Activated T-helper 1 cell treated with anti-CD3 and anti-CD28 coated beads, Interleukin-12 subunit alpha, Interleukin-12 subunit beta, Interleukin-2, Interleukin-4 antibody, amounts not matched to agents 30 ng/mL and 10 ng/mL and 1 ng/mL, durations not matched to agents 14 hours and 24 hours and 36 hours (primary cell): ENCODE measurements at regions of chr1 and their contacts with region 1.

Region 1: DNA sequence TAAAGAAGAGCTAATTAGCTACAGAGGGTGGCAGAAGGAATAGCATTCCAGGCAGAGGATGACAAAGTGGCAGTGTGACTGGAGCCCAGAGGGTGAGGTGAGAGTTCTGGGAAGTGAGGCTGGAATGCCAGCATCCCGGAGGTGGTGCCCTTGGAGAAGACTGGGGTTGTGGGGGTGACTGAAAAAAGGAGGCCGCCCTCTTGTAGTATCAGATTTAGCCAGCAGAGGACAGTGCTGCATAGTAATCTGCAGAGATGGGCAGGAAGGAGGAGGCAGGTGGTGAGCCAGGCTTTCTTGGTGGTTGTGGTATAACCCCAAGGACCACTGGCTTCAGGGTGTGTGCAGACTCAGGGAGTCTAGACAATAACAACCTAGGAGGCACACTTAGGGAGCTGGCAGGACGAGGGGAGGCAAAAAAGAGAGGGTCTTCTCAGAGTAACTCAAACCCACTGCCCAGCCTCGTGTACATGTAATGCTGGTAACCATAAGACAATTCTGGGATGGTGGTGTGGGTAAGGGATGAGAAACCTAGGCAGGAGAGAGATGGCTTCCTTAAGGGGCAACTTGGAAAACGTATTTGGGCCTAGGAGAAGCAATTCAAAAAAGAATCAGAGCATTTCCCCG is 30.5 kb downstream of the MROH7 start:
- DNase-seq: peak; percentile 59
- H3K4me3 Mint-ChIP-seq: no peak overlapping the region
- H3K27ac Mint-ChIP-seq: no peak overlapping the region
- H3K4me1 Mint-ChIP-seq: no peaks in the 10 kb centered on the region
- H3K27me3 Mint-ChIP-seq: peaks cover 6% of the 10 kb centered on the region

Region 2: GRCh38 chr1:54070171-54070837 is 601.8 kb before region 1 on chr1:
- intact Hi-C with region 1: loop called (anchors 5 kb)
- DNase-seq: no peak
- H3K4me3 Mint-ChIP-seq: no peak overlapping the region
- H3K27ac Mint-ChIP-seq: no peak overlapping the region
- H3K4me1 Mint-ChIP-seq: no peaks in the 10 kb centered on the region
- H3K27me3 Mint-ChIP-seq: no peaks in the 10 kb centered on the region

Region 3: DNA sequence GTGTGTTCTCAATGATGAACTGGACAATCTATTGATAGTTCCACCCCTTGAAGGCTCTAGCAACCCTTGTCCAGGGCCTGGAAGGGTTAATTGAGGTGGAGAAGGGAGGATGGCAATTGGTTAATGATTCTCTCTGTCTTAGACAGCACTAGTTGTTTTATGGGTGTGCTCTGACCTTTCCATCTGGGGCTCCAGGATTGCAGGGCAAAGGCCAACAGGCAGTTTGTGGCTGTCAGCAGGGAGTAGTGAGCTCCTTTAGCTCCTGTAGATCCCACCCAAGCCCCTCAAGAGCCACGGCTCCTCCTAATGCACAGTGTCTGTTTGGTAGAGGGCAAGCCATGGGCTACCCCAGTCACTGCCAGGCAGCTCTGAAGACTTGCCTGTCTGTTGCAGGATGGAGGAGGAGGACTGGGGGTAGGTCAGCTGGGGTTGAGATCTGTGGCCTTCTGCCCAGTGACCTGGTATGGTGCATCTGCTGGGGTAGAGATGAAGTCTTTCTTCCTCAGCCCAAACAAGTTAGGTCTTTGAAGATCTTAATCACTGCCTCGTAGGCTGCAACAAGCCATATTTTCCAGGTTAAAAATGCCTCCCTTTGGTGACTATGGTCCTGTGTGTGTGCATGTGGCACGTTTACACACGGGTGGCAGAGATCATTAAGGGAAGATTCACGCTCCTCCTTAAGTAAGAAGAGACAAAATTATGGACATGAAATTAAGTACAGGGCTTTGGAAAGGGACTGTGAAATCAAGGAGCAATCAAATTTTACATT is 22.8 kb before region 1 on chr1:
- intact Hi-C with region 1: no loop called
- DNase-seq: no peak
- H3K4me3 Mint-ChIP-seq: no peak overlapping the region
- H3K27ac Mint-ChIP-seq: no peak overlapping the region
- H3K4me1 Mint-ChIP-seq: no peaks in the 10 kb centered on the region
- H3K27me3 Mint-ChIP-seq: peaks cover 1% of the 10 kb centered on the region